ENCODE measurements at regions of chr17 and their contacts with region 1.

Region 1: GRCh38 chr17:82754297-82755208 is 2.7 kb downstream of the TBCD start:
- H3K4me3 ChIP-seq: no peak overlapping the region
- H3K27ac ChIP-seq: 0 out of 2 replicates have a peak overlapping the region, but pooled peaks have one; percentile 10
- H3K4me1 ChIP-seq: peaks cover 8% of the 10 kb centered on the region
- CTCF ChIP-seq: no peak

Region 2: GRCh38 chr17:82737967-82738877 is 16.3 kb before region 1 on chr17:
- CTCF ChIA-PET with region 1: no interaction called
- POLR2A ChIA-PET with region 1: no interaction called
- H3K4me3 ChIP-seq: no peak overlapping the region
- H3K27ac ChIP-seq: no peak overlapping the region
- H3K4me1 ChIP-seq: no peaks in the 10 kb centered on the region
- CTCF ChIP-seq: no peak

Region 3: GRCh38 chr17:82775001-82775823 is 20.7 kb after region 1 on chr17:
- CTCF ChIA-PET with region 1: interaction called, 13 read pairs
- POLR2A ChIA-PET with region 1: no interaction called
- H3K4me3 ChIP-seq: no peak overlapping the region
- H3K27ac ChIP-seq: no peak overlapping the region
- H3K4me1 ChIP-seq: no peaks in the 10 kb centered on the region
- CTCF ChIP-seq: peak; percentile 69

Measured in HEK293 (cell line).